Activated B cell treated with CpG ODN at 0.5 μM for 24 hours (primary cell): ENCODE measurements at regions of chr1 and their contacts with region 1.

Region 1: DNA sequence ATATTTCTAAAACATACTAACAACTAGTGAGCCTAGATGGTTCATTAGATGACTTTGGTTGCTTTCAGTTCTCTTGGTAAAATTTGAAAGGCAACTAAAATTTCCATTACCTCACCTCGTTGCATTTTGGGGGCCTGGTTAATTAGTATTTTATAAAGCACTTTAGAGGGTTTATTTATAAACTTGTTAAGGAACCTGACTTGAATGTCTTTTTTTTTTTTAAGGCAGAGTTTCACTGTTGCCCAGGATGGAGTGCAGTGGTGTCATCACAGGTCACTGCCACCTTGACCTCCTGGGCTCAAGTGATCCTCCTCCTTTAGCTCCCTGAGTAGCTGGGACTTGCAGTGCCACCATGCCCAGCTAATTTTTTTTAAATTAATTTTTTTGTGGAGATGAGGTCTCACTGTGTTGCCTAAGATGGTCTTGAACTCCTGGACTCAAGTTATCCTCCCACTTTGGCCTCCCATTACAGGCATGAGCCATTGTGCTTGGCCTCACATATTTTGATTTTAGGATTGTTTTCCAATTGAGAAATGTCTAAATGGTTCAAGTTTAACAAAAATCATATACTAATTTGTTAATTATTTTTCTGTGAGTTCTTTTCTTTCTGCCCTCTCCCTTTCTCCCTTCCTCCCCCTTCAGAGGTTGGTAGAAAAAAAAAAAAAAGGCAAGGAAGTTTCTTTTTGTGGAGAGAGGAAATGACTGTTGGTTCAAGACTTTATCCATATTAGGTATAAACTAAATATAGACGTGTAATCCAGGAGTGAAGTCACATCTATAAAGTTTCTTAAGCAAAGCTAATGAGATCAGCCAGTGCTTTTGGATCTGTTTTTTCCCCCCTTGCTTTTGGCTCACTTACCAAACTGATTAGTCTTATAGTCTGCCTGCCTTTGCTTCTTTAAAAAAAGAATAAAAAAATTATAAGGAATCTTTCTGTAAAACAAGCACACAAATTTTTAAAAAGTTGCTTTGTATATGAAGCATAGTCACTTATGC is 24.7 kb downstream of the CLIC4 start:
- DNase-seq: no peak
- ATAC-seq: peak; percentile 49
- H3K4me3 Mint-ChIP-seq: no peak overlapping the region
- H3K27ac Mint-ChIP-seq: no peak overlapping the region
- H3K4me1 Mint-ChIP-seq: peaks cover 57% of the 10 kb centered on the region
- H3K27me3 Mint-ChIP-seq: no peaks in the 10 kb centered on the region
- CTCF ChIP-seq: no peak

Region 2: GRCh38 chr1:23977187-23977853 is 792.6 kb before region 1 on chr1:
- CTCF ChIA-PET with region 1: no interaction called
- POLR2A ChIA-PET with region 1: no interaction called
- intact Hi-C with region 1: no loop called
- DNase-seq: no peak
- ATAC-seq: no peak
- H3K4me3 Mint-ChIP-seq: peak overlapping the region; percentile 41
- H3K27ac Mint-ChIP-seq: no peak overlapping the region
- H3K4me1 Mint-ChIP-seq: peaks cover 69% of the 10 kb centered on the region
- H3K27me3 Mint-ChIP-seq: no peaks in the 10 kb centered on the region
- CTCF ChIP-seq: no peak

Region 3: DNA sequence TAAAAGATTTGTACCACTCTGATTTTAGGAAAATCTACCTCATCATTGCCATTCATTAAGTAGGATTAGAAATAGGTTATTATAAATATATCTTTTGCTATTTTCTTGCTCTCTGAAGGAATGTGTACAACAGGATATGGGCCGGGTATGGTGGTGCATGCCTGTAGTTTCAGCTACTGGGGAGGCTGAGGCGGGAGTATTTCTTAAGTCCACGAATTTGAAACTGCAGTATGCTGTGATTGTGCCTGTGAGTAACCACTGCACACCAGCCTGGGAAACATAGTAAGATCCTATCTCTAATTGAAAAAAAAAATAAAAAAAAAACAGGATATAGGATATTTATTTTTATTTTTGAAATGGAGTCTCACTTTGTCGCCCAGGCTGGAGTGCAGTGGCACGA is 25.3 kb after region 1 on chr1:
- CTCF ChIA-PET with region 1: no interaction called
- POLR2A ChIA-PET with region 1: no interaction called
- intact Hi-C with region 1: no loop called
- DNase-seq: no peak
- ATAC-seq: no peak
- H3K4me3 Mint-ChIP-seq: no peak overlapping the region
- H3K27ac Mint-ChIP-seq: no peak overlapping the region
- H3K4me1 Mint-ChIP-seq: peaks cover 34% of the 10 kb centered on the region
- H3K27me3 Mint-ChIP-seq: no peaks in the 10 kb centered on the region
- CTCF ChIP-seq: no peak

Region 4: GRCh38 chr1:24805534-24806301 is 35.8 kb after region 1 on chr1:
- CTCF ChIA-PET with region 1: no interaction called
- POLR2A ChIA-PET with region 1: no interaction called
- intact Hi-C with region 1: loop called (anchors 5 kb)
- DNase-seq: no peak
- ATAC-seq: no peak
- H3K4me3 Mint-ChIP-seq: no peak overlapping the region
- H3K27ac Mint-ChIP-seq: no peak overlapping the region
- H3K4me1 Mint-ChIP-seq: peaks cover 63% of the 10 kb centered on the region
- H3K27me3 Mint-ChIP-seq: no peaks in the 10 kb centered on the region
- CTCF ChIP-seq: no peak

Region 5: GRCh38 chr1:24923485-24924113 is 153.6 kb after region 1 on chr1:
- CTCF ChIA-PET with region 1: no interaction called
- POLR2A ChIA-PET with region 1: interaction called, 11 read pairs
- intact Hi-C with region 1: no loop called
- DNase-seq: peak; percentile 50
- ATAC-seq: peak; percentile 78
- H3K4me3 Mint-ChIP-seq: peak overlapping the region; percentile 74
- H3K27ac Mint-ChIP-seq: peak overlapping the region; percentile 96
- H3K4me1 Mint-ChIP-seq: peaks cover 79% of the 10 kb centered on the region
- H3K27me3 Mint-ChIP-seq: no peaks in the 10 kb centered on the region
- CTCF ChIP-seq: no peak